ENCODE measurements at regions of chr1 and their contacts with region 1.

Region 1: GRCh38 chr1:153633716-153634665 is at the start of gene CHTOP:
- DNase-seq: peak; percentile 99
- ATAC-seq: peak; percentile 94
- H3K4me3 Mint-ChIP-seq: peak within 1 kb of the TSS; percentile 92
- H3K27ac Mint-ChIP-seq: peak within 1 kb of the TSS; percentile 100
- H3K4me1 Mint-ChIP-seq: peaks cover 27% of the 10 kb centered on the region
- H3K27me3 Mint-ChIP-seq: no peaks in the 10 kb centered on the region
- total RNA-seq, gene CHTOP: 98.1 to 105 TPM

Region 2: DNA sequence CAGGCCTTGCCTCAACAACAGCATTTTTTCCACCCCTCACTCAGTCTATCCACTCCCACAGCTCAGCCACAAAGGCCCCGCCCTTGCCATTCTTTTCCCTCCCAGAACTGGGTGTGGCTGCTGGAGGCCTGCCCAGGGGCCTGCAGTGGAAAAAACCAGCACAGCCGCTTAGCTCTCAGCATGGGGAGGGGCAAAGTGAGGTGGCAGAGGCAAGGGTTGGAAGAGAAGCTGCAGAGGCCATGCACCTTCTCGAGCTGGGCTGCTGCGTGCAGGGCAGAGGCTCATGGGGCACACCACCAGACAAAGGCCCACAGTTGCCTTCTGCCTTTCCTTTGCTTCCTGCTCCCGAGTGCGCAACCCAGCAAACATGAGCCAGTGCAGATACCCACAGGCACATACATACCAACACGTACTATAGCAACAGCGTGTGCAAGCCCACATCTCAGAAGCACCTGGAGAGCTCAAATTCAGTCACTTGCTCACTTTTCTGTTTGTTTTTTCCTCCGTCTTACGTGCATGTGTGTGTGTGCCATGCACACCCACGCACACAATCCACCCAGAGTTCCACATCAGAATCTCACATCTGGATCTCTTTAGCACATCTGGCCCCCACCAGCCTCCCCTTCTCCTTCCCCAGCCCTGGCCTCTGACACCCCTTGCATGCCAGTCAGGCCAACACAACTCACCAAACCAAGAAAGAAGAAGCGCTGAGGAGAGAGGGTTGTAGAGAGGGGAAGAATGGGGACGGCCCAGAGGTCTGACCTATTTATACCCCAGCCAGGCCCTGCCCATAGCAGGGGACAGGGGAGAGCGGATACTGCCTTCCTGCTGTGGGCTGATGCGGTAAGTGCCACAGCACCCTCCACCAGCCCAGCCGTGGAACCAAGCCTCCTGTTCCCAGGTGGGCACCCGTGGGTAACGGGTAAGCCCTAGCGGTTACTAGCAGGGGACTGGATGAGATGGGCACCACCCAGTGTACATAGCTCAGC is 88.6 kb before region 1 on chr1 and contains the start of gene S100A4:
- POLR2A ChIA-PET with region 1: interaction called, 20 read pairs
- DNase-seq: peak; percentile 86
- ATAC-seq: peak; percentile 81
- H3K4me3 Mint-ChIP-seq: peak within 1 kb of the TSS; percentile 93
- H3K27ac Mint-ChIP-seq: peak within 1 kb of the TSS; percentile 96
- H3K4me1 Mint-ChIP-seq: peaks cover 58% of the 10 kb centered on the region
- H3K27me3 Mint-ChIP-seq: no peaks in the 10 kb centered on the region
- total RNA-seq, gene S100A4: 385 to 394 TPM

Region 3: GRCh38 chr1:153649863-153650235 is 15.9 kb after region 1 on chr1:
- POLR2A ChIA-PET with region 1: interaction called, 44 read pairs
- DNase-seq: peak; percentile 36
- ATAC-seq: peak; percentile 14
- H3K4me3 Mint-ChIP-seq: peak overlapping the region; percentile 17
- H3K27ac Mint-ChIP-seq: peak overlapping the region; percentile 86
- H3K4me1 Mint-ChIP-seq: peaks cover 29% of the 10 kb centered on the region
- H3K27me3 Mint-ChIP-seq: no peaks in the 10 kb centered on the region

Region 4: GRCh38 chr1:153670859-153671627 is 37.1 kb after region 1 on chr1 and contains the start of gene ILF2:
- POLR2A ChIA-PET with region 1: interaction called, 28 read pairs
- DNase-seq: peak; percentile 91
- ATAC-seq: peak; percentile 92
- H3K4me3 Mint-ChIP-seq: no peak within 1 kb of the TSS
- H3K27ac Mint-ChIP-seq: peak within 1 kb of the TSS; percentile 85
- H3K4me1 Mint-ChIP-seq: peaks cover 23% of the 10 kb centered on the region
- H3K27me3 Mint-ChIP-seq: no peaks in the 10 kb centered on the region
- total RNA-seq, gene ILF2: 141 to 142 TPM

Region 5: GRCh38 chr1:153750026-153750995 is 116.3 kb after region 1 on chr1:
- POLR2A ChIA-PET with region 1: no interaction called
- DNase-seq: no peak
- ATAC-seq: no peak
- H3K4me3 Mint-ChIP-seq: no peak overlapping the region
- H3K27ac Mint-ChIP-seq: no peak overlapping the region
- H3K4me1 Mint-ChIP-seq: peaks cover 6% of the 10 kb centered on the region
- H3K27me3 Mint-ChIP-seq: no peaks in the 10 kb centered on the region

Region 6: GRCh38 chr1:153977250-153978240 is 343.6 kb after region 1 on chr1 and contains the start of gene JTB:
- POLR2A ChIA-PET with region 1: interaction called, 13 read pairs
- DNase-seq: peak; percentile 80
- ATAC-seq: peak; percentile 93
- H3K4me3 Mint-ChIP-seq: peak within 1 kb of the TSS; percentile 97
- H3K27ac Mint-ChIP-seq: peak within 1 kb of the TSS; percentile 93
- H3K4me1 Mint-ChIP-seq: peaks cover 42% of the 10 kb centered on the region
- H3K27me3 Mint-ChIP-seq: no peaks in the 10 kb centered on the region
- total RNA-seq, gene JTB: 118 TPM

Measured in activated naive CD8-positive, alpha-beta T cell treated with anti-CD3 and anti-CD28 coated beads, Interleukin-2, amount 10 ng/mL, durations not matched to agents 7 days and 5 days (primary cell).